Activated CD4-positive, alpha-beta memory T cell treated with anti-CD3 and anti-CD28 coated beads, Interleukin-2, amount 10 ng/mL, durations not matched to agents 7 days and 5 days (primary cell): ENCODE measurements at regions of chr19 and their contacts with region 1.

Region 1: DNA sequence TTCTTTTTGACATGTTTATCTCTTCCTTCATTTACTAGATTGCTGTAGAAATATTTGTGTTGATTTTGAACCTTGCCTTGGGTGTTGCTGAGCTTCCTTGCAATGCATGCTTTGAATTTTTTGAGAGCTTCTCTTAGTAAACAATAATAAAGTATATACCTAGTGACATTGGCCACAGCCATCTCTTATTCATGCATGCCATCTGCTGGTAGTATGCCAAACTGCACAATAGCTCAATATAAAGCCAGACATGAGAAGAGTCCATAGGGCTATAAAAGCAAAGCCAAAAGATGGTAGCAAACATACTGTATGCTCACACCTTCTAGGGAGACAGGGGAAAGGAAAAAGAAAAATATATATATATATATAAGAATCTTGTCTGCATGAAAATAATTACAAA is 18.9 kb upstream of the ZSCAN5A start:
- DNase-seq: peak; percentile 44
- H3K4me3 Mint-ChIP-seq: no peak overlapping the region
- H3K27ac Mint-ChIP-seq: no peak overlapping the region
- H3K4me1 Mint-ChIP-seq: no peaks in the 10 kb centered on the region
- H3K27me3 Mint-ChIP-seq: peaks cover 11% of the 10 kb centered on the region

Region 2: DNA sequence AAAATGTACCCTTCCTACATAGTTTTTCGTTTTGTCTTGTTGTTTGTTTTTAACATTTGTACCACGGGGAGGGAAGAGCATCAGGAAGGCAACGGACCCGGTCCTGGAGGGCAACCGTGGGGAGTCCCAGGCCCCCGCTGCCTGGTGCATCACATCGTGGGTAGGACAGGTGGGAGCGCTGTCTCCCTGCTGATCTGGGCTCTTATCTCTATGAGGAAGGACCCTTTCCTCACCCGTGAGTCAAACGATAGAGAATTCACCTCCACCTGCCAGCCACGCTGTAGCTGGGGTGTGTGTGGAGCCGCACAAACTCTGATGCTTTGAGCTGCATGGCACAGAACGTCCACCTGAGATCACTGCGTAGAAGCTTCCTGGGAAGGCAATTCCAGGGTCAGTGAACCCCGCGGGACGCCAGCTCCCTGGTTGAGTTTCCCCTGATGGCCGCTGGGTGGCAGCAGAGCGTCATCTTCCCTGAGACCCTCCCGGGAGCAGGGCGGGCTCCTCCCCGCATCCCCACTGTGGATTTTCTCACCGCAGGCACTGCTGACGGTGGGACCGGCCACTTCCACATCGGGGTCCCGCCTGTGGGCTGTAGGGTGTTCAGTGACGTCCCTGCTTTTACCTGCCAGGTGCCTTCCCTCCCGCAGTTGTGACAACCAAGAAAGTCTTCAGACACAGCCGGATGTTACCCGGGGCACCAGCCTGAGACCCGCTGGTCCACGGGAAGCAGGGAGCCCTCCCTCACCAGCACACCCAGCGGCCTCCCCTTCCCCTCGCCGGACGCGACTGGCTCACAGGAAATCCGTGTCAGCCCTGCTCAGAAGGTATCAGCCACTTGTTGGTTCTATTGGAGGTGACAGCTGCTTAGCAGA is 267.1 kb before region 1 on chr19:
- CTCF ChIA-PET with region 1: interaction called, 19 read pairs
- POLR2A ChIA-PET with region 1: no interaction called
- DNase-seq: peak; percentile 61
- H3K4me3 Mint-ChIP-seq: peak overlapping the region; percentile 6
- H3K27ac Mint-ChIP-seq: no peak overlapping the region
- H3K4me1 Mint-ChIP-seq: peaks cover 14% of the 10 kb centered on the region
- H3K27me3 Mint-ChIP-seq: peaks cover 9% of the 10 kb centered on the region

Region 3: DNA sequence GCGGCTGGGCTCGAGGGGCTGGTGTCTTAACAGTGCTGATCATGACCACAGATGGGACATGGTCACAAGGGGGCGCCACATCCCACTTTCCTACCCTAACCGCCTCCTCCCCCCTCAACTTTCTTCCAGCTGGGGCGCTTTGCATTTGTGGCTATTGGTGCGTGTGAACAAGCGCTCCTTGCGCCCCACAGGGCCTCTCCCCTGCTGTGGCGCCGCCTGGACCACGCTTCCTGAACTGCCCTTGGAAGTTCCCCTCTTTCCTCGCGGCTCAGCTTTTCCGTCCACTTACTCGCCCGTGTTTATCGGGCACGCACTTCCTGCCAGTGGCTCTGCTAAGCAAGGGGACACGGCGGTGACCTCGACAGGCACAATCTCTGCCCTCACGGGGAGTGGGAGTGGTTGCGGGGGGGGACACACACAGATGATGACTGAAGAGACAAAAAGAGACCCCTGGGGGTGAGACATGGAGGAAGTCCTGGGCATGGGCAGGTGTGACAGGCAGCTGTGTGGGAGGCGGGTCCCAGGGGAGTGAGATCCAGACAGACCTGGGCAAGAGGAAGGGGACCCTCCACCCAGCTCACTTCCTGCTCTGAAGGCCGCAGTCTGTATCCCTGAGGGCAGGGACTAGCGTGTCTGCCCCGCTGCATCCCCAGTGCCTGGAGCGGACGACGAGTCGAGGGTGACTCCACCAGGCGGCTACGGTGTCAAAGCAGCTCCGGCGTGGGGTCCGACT is 252.7 kb before region 1 on chr19:
- CTCF ChIA-PET with region 1: interaction called, 26 read pairs
- POLR2A ChIA-PET with region 1: no interaction called
- DNase-seq: peak; percentile 76
- H3K4me3 Mint-ChIP-seq: peak overlapping the region; percentile 68
- H3K27ac Mint-ChIP-seq: no peak overlapping the region
- H3K4me1 Mint-ChIP-seq: peaks cover 10% of the 10 kb centered on the region
- H3K27me3 Mint-ChIP-seq: peaks cover 4% of the 10 kb centered on the region